ENCODE measurements at regions of chr16 and their contacts with region 1.

Region 1: DNA sequence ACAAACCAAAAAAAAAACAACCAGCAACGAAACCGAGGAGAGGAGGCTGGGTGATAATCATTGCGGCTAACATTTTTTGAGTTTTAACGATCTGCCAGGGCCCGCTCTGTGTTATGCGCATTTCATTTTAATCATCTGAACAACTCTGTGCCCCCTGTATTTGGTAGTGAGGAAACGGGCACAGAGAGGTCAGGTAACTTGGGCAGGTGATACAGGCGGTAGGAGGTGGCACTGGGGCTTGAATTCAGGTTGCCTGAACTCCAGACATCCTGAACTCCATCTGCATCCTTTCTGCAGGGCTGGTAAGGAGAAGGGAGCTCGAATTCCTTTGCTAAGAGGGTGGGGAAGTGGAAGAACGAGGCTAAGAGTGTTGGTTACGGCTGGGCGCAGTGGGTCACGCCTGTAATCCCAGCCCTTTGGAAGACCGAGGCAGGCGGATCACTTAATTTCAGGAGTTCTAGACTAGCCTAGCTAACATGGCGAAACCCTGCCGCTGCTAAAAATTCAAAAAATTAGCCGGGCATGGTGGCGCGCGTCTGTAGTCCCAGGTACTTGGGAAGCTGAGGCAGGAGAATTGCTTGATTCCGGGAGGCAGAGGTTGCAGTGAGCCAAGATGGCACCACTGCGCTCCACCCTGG is 1.1 kb downstream of the CLUAP1 start:
- DNase-seq: no peak
- ATAC-seq: no peak
- H3K4me3 ChIP-seq: peak overlapping the region; percentile 83 to 93
- H3K27ac ChIP-seq: peak overlapping the region; percentile 84
- H3K4me1 ChIP-seq: 0 out of 2 replicates have a peak, but pooled peaks cover 9% of the 10 kb centered on the region
- H3K27me3 ChIP-seq: no peaks in the 10 kb centered on the region
- CTCF ChIP-seq: no peak

Region 2: GRCh38 chr16:3488801-3489200 is 13.1 kb before region 1 on chr16:
- CTCF ChIA-PET with region 1: no interaction called
- POLR2A ChIA-PET with region 1: interaction called, 10 read pairs
- in situ Hi-C with region 1: no loop called
- intact Hi-C with region 1: no loop called
- DNase-seq: no peak
- ATAC-seq: no peak
- H3K4me3 ChIP-seq: no peak overlapping the region
- H3K27ac ChIP-seq: no peak overlapping the region
- H3K4me1 ChIP-seq: no peaks in the 10 kb centered on the region
- H3K27me3 ChIP-seq: no peaks in the 10 kb centered on the region
- CTCF ChIP-seq: no peak